ENCODE measurements at regions of chr14 and their contacts with region 1.

Region 1: DNA sequence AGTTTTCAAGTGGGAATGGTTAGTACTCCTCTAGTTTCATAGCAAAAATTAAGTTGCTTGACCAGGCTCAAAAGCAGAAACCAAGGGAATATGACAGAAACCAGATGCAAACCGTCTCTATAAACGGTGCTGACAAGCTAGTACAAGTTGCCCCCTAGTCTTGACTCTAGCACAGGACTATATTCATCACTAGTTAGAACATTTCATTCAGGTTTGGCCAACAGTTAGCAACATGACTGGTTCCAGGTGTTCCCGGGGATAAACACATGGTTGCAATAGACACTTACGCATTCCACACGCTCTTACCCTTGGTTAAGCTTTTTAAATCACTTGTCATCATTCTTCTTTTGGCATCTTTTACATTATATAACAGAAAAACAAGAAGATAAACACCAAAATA is 103.6 kb downstream of the SCFD1 start:
- DNase-seq: no peak
- ATAC-seq: no peak
- H3K4me3 ChIP-seq: no peak overlapping the region
- H3K27ac ChIP-seq: no peak overlapping the region
- H3K4me1 ChIP-seq: no peaks in the 10 kb centered on the region
- H3K27me3 ChIP-seq: no peaks in the 10 kb centered on the region
- CTCF ChIP-seq: no peak
- EP300 ChIP-seq: no peak
- POLR2A ChIP-seq: no peak
- RAD21 ChIP-seq: no peak

Region 2: DNA sequence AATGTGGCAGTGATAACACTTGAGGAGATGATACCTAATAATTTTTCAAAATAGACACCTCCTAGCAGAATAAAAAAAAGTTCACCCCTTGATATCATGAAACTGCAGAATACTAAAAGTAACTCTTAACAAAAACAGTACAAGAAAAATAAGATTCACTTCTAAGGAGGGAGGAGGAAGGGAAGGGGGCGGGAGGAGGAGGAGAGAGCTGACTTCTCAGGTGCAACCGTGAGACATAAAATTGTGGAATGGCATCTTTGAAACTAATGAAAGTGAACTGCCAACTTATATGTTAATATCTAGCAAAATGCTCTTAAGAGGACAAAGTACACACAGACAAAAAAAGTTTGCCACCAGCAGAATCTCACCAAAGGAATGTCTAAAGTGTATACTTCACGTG is 12.2 kb after region 1 on chr14:
- CTCF ChIA-PET with region 1: no interaction called
- POLR2A ChIA-PET with region 1: no interaction called
- in situ Hi-C with region 1: no loop called
- intact Hi-C with region 1: loop called (anchors 2 kb)
- DNase-seq: no peak
- ATAC-seq: no peak; the same call in 2 of the 3 replicates
- H3K4me3 ChIP-seq: no peak overlapping the region
- H3K27ac ChIP-seq: no peak overlapping the region
- H3K4me1 ChIP-seq: no peaks in the 10 kb centered on the region
- H3K27me3 ChIP-seq: no peaks in the 10 kb centered on the region; a peak in 1 of 5 replicates
- CTCF ChIP-seq: no peak
- EP300 ChIP-seq: no peak
- POLR2A ChIP-seq: no peak
- RAD21 ChIP-seq: no peak

Measured in HepG2 (cell line).